Dorsolateral prefrontal cortex (tissue), 120 donors: ENCODE measurements at regions of chr10 and their contacts with region 1.

Region 1: GRCh38 chr10:86087716-86088115 is 278.9 kb downstream of the GRID1 start:
- DNase-seq: peak in 9 of 10 donors; percentile 60 to 82 (median 79)
- H3K4me3 ChIP-seq: peak overlapping the region in 5 of 59 donors; percentile 9 to 23 (median 18)
- H3K27ac ChIP-seq: peak overlapping the region in 32 of 59 donors; percentile 1 to 75 (median 48)
- H3K27me3 ChIP-seq: no peaks in the 10 kb centered on the region
- CTCF ChIP-seq: peak in 8 of 56 donors; percentile 10 to 38 (median 16)

Region 2: GRCh38 chr10:86003201-86003621 is 84.5 kb before region 1 on chr10:
- intact Hi-C with region 1: loop called in 1 of 2 experiments (anchors 10 kb)
- DNase-seq: peak in 1 of 10 donors; percentile 27
- H3K4me3 ChIP-seq: no peak overlapping the region
- H3K27ac ChIP-seq: peak overlapping the region in 1 of 59 donors; percentile 2
- H3K27me3 ChIP-seq: no peaks in the 10 kb centered on the region
- CTCF ChIP-seq: no peak

Region 3: DNA sequence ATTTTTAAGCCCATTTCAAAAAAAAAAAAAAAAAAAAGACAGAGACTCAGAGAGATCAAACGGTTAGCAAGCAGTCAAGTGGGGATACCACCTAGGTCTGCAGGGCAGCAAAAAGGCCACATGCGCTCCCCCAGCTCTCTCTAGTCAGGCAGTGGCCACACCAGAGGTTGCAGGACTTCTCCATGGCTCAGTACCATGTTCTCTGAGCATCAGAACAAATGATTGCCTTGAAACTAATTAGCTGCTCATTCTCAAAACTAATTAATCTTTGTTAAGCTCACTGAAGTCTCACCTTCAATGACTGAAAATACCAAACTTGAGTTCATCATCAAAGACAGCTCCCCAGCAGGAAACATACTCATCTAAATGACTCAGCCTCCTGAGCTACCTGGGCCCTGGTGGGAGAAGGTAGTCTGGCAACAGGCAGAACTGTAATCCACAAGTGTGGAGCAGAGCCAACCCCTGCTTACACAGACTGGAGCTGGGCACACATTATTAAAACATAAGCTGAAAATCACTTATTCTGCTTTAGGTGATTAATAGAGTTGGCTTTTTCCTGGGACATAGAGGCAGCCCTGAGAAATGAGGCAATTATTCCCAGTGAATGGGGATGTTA is 40.8 kb before region 1 on chr10:
- intact Hi-C with region 1: no loop called
- DNase-seq: no peak
- H3K4me3 ChIP-seq: no peak overlapping the region
- H3K27ac ChIP-seq: no peak overlapping the region
- H3K27me3 ChIP-seq: no peaks in the 10 kb centered on the region
- CTCF ChIP-seq: no peak

Region 4: DNA sequence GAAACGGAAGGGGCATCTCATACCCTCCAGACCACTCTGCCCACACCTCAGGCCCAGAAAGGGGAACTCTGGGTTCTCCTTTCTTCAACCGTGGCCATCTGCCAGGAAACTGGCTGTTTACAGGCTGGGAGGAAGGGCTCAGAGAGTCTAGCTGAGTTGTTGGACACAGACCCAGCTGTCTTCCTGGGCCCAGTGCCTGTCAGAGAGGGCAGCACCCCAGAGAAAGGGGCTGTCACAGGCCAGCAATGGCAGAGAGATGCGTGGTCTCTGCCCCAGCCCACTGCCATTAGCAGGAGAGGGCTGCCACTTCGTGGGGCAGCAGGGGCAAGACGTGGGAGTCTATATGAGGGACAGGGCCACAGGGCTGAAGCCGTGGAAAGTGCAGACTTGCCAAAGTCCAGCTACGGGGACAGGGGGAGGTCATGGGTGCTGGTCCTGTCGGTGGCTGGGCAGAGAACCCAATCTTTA is 267.9 kb after region 1 on chr10:
- intact Hi-C with region 1: loop called in 1 of 2 experiments (anchors 5 kb)
- DNase-seq: peak; percentile 30 to 92 (median 90)
- H3K4me3 ChIP-seq: peak overlapping the region in 12 of 59 donors; percentile 0 to 42 (median 16)
- H3K27ac ChIP-seq: peak overlapping the region; percentile 71 to 99 (median 95)
- H3K27me3 ChIP-seq: no peaks in the 10 kb centered on the region
- CTCF ChIP-seq: peak in 17 of 56 donors; percentile 14 to 54 (median 26)